Lower leg skin (tissue), 4 donors: ENCODE measurements at regions of chr9 and their contacts with region 1.

Region 1: GRCh38 chr9:12133416-12133815 is 559.8 kb upstream of the TYRP1 start:
- DNase-seq: no peak
- H3K4me3 ChIP-seq: no peak overlapping the region
- CTCF ChIP-seq: no peak
- POLR2A ChIP-seq: no peak

Region 2: DNA sequence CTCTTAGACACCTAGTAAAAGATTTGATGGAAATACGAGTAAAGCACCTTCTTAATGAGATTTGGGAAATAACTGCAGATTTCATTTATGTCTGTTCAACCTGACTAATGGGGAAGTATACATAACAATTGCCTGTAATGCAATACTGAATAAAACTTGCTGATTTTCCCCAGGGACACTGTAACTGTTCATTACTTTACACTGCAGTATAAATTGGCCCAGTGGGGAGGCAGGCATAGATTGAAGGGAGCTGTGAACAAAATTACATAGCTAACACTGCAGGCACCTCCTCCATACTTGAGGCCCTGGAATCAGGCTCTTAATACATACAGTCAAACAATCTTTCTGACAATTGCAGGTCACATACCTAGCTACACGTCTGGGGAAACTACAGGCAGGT is 1736.8 kb before region 1 on chr9:
- intact Hi-C with region 1: loop called (anchors 5 kb)
- DNase-seq: no peak
- H3K4me3 ChIP-seq: no peak overlapping the region
- CTCF ChIP-seq: no peak
- POLR2A ChIP-seq: no peak

Region 3: DNA sequence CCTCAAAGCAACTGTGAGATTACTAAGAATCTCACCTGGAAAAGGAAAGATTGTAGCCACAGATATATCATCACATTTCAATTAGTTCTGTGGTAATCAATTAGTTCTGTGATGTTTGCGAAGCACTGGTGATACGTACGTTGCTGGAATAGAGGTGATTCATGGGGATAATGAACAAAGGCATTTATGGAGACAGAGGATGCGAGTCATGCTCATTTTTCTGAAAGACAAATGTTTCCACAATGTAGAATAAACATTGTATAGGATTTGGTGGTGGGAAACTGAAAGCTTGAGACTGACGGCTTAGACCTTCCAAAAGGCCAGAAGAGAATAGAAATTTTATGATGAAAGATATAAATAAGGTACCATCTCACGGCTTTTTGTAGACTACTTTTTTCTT is 52.4 kb after region 1 on chr9:
- intact Hi-C with region 1: no loop called
- DNase-seq: no peak
- H3K4me3 ChIP-seq: no peak overlapping the region
- CTCF ChIP-seq: no peak
- POLR2A ChIP-seq: no peak